ENCODE measurements at regions of chr17 and their contacts with region 1.

Region 1: DNA sequence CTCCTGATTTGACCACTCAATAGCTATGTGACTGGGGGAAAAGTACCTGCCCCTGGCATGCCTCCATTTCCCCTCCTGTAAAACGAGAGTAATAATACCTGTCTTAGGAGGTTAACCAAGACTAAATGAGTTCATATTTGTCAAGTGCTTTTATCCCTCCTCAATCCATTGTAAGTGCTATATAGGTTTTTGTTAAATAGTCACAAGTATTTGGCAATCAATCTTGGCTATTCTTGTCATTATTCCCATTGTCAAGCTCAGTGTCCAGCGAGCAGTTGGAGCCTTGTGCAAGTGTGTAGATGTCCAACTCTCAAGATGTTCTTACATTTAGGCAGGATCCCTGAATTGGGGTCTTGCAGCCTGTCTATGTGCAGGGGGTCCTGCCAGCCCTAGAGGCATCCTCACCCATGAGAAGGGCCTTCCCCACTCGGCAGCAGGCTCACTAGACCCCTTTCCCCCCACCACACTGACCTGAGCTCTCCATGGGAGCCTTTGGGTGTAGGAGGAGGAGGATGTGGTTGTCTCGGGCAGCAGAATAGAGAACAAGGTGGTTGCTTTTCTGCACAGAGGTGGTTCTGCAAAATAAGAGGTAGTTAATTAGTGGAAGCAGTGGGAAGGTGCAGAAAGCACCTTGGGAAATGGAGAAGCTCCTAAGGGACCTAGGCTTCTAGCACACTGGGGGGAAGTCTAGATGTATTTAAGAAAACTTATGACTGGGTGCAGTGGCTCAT is 18.0 kb downstream of the PIK3R6 start:
- DNase-seq: no peak
- H3K4me3 Mint-ChIP-seq: no peak overlapping the region
- H3K27ac Mint-ChIP-seq: no peak overlapping the region
- H3K4me1 Mint-ChIP-seq: peaks cover 4% of the 10 kb centered on the region
- H3K27me3 Mint-ChIP-seq: no peaks in the 10 kb centered on the region

Region 2: DNA sequence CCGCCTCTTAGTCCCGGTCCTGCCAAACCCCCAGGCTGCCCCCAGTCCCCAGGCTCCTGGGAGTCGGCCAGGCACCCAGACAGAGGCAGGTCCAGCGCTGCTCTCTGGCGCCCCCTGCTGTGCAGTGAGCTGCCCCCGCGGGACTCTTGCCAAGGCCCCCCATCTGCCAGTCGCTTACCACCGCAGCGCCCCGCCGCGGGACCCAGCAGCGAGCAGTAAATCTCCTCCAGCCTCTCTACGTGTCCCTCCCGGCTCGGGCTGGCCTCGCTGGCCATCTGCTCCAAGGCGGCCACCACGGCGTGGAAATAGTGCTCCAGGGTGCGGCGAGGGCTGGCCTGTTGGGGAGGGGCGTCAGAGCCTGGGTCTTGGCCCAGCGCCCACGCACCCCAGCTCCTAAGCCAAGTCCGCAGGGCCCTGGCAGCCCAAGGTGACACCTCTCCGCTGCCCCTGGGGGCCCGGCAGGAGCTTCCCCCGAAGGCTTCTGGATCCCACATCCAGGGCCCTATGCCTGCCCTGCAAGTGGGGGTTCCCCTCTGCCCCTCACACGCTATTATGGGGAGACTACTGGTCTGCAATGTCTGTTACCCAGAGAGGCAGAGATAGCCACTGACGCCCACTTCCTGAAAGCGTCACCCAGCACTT is 16.6 kb before region 1 on chr17:
- CTCF ChIA-PET with region 1: interaction called, 12 read pairs
- POLR2A ChIA-PET with region 1: no interaction called
- intact Hi-C with region 1: no loop called
- DNase-seq: peak; percentile 47
- H3K4me3 Mint-ChIP-seq: no peak overlapping the region
- H3K27ac Mint-ChIP-seq: no peak overlapping the region
- H3K4me1 Mint-ChIP-seq: no peaks in the 10 kb centered on the region
- H3K27me3 Mint-ChIP-seq: no peaks in the 10 kb centered on the region